ENCODE measurements at regions of chr20 and their contacts with region 1.

Region 1: GRCh38 chr20:62712606-62713005 is 4.0 kb downstream of the NTSR1 start:
- DNase-seq: no peak
- ATAC-seq: no peak
- H3K4me3 ChIP-seq: no peak overlapping the region
- H3K27ac ChIP-seq: no peak overlapping the region
- H3K4me1 ChIP-seq: peaks cover 14 to 56% of the 10 kb centered on the region in 2 experiments; a peak in 4 of 5 replicates
- H3K27me3 ChIP-seq: peaks cover 11 to 53% of the 10 kb centered on the region in 2 experiments; a peak in 4 of 5 replicates
- CTCF ChIP-seq: no peak
- EP300 ChIP-seq: no peak
- POLR2A ChIP-seq: no peak
- RAD21 ChIP-seq: no peak

Region 2: GRCh38 chr20:62745260-62745951 is 32.8 kb after region 1 on chr20:
- CTCF ChIA-PET with region 1: no interaction called
- POLR2A ChIA-PET with region 1: interaction called, 11 read pairs
- in situ Hi-C with region 1: no loop called
- intact Hi-C with region 1: no loop called
- DNase-seq: no peak
- ATAC-seq: no peak
- H3K4me3 ChIP-seq: no peak overlapping the region
- H3K27ac ChIP-seq: no peak overlapping the region
- H3K4me1 ChIP-seq: peaks cover 7 to 22% of the 10 kb centered on the region in 2 experiments
- H3K27me3 ChIP-seq: peaks cover 31 to 50% of the 10 kb centered on the region in 2 experiments
- CTCF ChIP-seq: no peak
- EP300 ChIP-seq: no peak
- POLR2A ChIP-seq: no peak
- RAD21 ChIP-seq: no peak